ENCODE measurements at regions of chr11 and their contacts with region 1.

Region 1: GRCh38 chr11:130131961-130132850 is 27.4 kb upstream of the ST14 start:
- DNase-seq: peak; percentile 65
- H3K4me3 ChIP-seq: no peak overlapping the region
- H3K27ac ChIP-seq: no peak overlapping the region
- H3K4me1 ChIP-seq: peaks cover 4% of the 10 kb centered on the region
- H3K27me3 ChIP-seq: no peaks in the 10 kb centered on the region
- CTCF ChIP-seq: peak; percentile 88 to 92

Region 2: DNA sequence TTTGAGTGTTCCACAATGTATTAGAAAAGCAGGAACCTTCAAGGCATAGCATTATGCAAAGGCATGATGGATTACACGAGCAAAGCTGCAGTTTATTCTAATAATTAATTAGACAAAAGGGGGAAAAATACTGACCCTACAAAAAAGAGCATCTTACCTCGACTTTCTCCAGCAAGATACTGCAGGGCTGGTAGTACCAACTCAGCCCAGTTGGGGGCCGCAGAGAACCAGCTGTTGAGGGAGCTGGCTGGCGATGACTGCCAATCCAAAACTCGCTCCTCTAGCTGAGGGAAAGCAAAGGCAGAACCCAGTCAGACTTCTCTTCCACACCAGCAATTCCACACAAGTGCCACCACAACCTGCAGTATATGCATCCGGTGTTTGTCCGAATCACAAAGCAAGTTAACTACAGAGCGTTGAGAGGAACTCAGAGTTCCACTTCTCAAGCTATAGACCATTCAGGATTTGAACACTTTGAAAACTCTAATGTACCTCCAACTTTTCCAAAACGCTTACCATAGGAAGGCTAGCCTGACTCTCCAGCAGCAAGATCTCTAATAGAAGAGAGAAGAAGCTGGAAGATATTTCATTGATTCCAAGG is 250.5 kb before region 1 on chr11:
- CTCF ChIA-PET with region 1: interaction called, 11 read pairs
- dilution Hi-C with region 1: no loop called
- in situ Hi-C with region 1: no loop called
- intact Hi-C with region 1: no loop called
- DNase-seq: peak; percentile 17
- H3K4me3 ChIP-seq: no peak overlapping the region
- H3K27ac ChIP-seq: no peak overlapping the region
- H3K4me1 ChIP-seq: no peaks in the 10 kb centered on the region
- H3K27me3 ChIP-seq: no peaks in the 10 kb centered on the region
- CTCF ChIP-seq: peak; percentile 59 to 73

Region 3: GRCh38 chr11:129905402-129905801 is 226.8 kb before region 1 on chr11:
- CTCF ChIA-PET with region 1: interaction called, 17 read pairs
- dilution Hi-C with region 1: no loop called
- in situ Hi-C with region 1: no loop called
- intact Hi-C with region 1: no loop called
- DNase-seq: no peak
- H3K4me3 ChIP-seq: no peak overlapping the region
- H3K27ac ChIP-seq: no peak overlapping the region
- H3K4me1 ChIP-seq: no peaks in the 10 kb centered on the region
- H3K27me3 ChIP-seq: no peaks in the 10 kb centered on the region
- CTCF ChIP-seq: no peak

Region 4: GRCh38 chr11:129922674-129923073 is 209.5 kb before region 1 on chr11:
- CTCF ChIA-PET with region 1: interaction called, 9 read pairs
- dilution Hi-C with region 1: no loop called
- in situ Hi-C with region 1: loop called in 1 of 2 experiments (anchors 5 kb)
- intact Hi-C with region 1: loop called (anchors 1 kb)
- DNase-seq: no peak
- H3K4me3 ChIP-seq: no peak overlapping the region
- H3K27ac ChIP-seq: no peak overlapping the region
- H3K4me1 ChIP-seq: no peaks in the 10 kb centered on the region
- H3K27me3 ChIP-seq: no peaks in the 10 kb centered on the region
- CTCF ChIP-seq: no peak

Region 5: DNA sequence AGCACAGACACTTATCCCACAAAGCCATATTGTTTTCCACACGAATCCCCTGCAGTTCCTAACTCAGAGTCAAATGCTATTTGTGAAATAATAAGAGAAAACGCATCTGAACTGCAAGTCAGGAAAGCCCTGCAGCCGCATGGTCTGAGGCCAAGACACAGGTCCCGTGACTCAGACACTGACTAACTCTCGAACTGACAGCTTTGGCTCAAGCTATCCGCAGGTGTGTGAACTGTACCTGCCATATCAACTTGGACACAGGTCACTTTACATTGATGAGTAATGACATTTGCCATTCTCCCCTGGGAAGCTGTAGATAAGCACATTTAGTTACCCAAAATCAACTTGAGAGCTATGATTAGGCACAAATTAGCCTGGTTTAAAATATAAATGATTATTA is 201.9 kb before region 1 on chr11:
- CTCF ChIA-PET with region 1: no interaction called
- dilution Hi-C with region 1: no loop called
- in situ Hi-C with region 1: loop called (anchors 5 kb)
- intact Hi-C with region 1: no loop called
- DNase-seq: peak; percentile 76
- H3K4me3 ChIP-seq: no peak overlapping the region
- H3K27ac ChIP-seq: no peak overlapping the region
- H3K4me1 ChIP-seq: peaks cover 27% of the 10 kb centered on the region
- H3K27me3 ChIP-seq: no peaks in the 10 kb centered on the region
- CTCF ChIP-seq: no peak